Activated naive CD8-positive, alpha-beta T cell treated with anti-CD3 and anti-CD28 coated beads, Interleukin-2, amount 10 ng/mL, durations not matched to agents 7 days and 5 days (primary cell): ENCODE measurements at regions of chr1 and their contacts with region 1.

Region 1: DNA sequence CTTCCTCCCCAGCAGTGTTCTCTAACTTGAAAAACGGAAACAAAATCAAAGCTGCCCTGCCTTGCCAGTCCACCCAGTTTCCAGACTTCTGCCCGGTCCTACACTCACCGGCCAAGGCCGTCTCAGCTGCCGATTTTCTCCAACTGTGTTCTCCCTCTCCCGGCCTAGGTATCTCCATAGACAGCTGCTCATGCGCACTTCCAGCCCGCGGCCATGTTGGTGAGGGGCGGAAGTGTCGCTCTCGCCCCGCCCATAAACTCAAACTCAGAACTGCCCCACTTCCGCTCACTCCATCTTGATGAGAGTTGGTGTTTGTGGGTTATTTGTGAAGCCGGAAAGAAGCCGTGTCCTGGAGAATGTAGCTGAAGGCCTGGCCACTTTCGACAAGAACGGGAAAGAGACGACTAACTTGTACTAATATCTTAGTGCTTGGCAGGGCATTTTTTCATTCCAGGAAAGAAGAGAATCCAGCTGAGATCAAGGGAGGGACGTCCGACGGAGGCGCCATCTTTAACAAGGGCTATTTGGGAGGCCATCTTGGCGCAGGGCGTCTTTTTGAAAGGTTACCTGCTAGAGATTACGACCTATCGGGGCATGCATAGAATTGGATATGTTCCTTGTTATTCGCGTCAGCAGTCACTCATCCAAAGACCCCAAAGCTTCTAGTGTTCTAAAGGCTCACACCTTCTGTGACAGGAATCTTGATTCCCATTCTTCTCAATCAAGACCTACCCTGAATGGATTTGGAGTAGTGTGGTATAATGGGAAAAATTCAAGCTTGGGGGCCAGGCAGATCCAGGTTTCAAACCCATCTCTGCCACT is at the start of gene USF1:
- DNase-seq: peak; percentile 93
- ATAC-seq: peak; percentile 73
- H3K4me3 Mint-ChIP-seq: peak within 1 kb of the TSS; percentile 93
- H3K27ac Mint-ChIP-seq: peak within 1 kb of the TSS; percentile 99
- H3K4me1 Mint-ChIP-seq: peaks cover 36% of the 10 kb centered on the region
- H3K27me3 Mint-ChIP-seq: no peaks in the 10 kb centered on the region
- total RNA-seq, gene USF1: 93.0 to 96.3 TPM

Region 2: DNA sequence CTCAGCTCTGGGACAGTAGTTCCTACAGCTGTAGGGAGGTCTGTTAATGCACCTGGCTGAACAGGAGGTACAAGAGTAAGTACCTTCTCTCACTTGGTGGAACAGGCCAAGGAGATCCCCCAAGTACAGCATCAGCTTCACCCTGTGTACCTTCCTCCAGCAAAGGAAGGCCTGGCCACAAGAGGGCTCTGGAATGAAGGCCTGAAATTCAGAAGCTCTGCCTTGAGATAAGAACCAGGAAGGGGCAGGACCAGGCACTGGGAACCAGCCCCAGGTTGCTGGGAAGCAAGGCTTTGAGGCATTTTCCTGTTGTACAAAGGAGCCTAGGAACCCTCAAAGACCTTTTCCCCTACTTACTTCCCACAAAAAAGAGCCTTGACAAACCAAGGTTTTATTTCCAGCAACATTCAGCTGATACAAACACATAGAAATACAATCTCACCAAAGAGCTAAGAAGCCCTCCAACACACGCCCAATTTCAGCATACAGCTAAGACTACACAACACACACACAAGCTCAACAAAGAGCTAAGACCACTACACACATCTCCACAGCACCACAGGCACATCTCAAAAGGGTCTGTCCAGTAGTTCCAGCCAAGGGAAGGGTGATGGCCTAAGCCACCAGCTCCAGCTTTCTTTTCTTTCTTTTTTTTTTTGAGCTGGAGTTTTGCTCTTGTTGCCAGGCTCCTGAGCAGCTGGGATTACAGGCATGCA is 48.5 kb before region 1 on chr1:
- POLR2A ChIA-PET with region 1: interaction called, 22 read pairs
- DNase-seq: no peak
- ATAC-seq: peak; percentile 83
- H3K4me3 Mint-ChIP-seq: no peak overlapping the region
- H3K27ac Mint-ChIP-seq: peak overlapping the region; percentile 57
- H3K4me1 Mint-ChIP-seq: peaks cover 7% of the 10 kb centered on the region
- H3K27me3 Mint-ChIP-seq: peaks cover 3% of the 10 kb centered on the region

Region 3: DNA sequence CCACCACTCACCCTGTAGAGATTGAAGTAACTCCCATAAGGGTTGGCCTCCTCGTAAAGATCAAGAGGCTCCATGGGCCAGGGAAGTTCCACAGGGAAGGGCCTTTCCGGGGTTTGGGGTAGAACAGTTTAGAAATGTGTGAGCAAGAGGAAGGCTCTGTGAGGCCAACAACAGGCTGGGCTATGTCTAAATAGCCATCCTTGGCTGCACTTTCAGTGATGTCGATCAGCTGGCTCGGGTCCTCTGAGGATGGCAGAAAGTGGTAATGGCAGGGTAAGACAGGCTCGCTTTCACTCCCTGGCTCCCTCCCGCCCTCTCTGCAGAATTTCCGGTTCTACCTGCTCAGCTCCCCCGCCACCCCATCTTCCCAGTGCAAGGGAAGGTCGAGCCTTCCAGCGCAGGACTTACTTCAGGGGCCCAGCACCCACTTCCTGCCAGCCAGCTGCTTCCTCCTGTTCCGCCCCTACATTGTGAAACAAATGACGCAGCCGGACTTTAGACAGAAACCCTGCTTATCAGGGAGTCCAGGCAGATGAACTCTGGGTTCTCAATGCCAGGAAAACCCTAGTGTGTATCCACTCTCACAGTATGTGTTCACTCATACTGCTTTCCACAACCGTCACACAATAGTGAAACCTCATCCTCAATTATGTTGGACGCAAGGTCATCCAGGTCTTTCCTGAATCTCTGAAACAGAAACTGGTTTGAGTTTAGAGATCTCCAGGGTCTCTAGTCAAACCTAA is 32.3 kb before region 1 on chr1:
- POLR2A ChIA-PET with region 1: interaction called, 18 read pairs
- DNase-seq: peak; percentile 66
- ATAC-seq: peak; percentile 92
- H3K4me3 Mint-ChIP-seq: peak overlapping the region; percentile 79
- H3K27ac Mint-ChIP-seq: peak overlapping the region; percentile 87
- H3K4me1 Mint-ChIP-seq: peaks cover 26% of the 10 kb centered on the region
- H3K27me3 Mint-ChIP-seq: no peaks in the 10 kb centered on the region

Region 4: GRCh38 chr1:161021165-161021960 is 24.6 kb before region 1 on chr1:
- POLR2A ChIA-PET with region 1: interaction called, 32 read pairs
- DNase-seq: peak; percentile 84
- ATAC-seq: peak; percentile 95
- H3K4me3 Mint-ChIP-seq: peak overlapping the region; percentile 97
- H3K27ac Mint-ChIP-seq: peak overlapping the region; percentile 79
- H3K4me1 Mint-ChIP-seq: peaks cover 29% of the 10 kb centered on the region
- H3K27me3 Mint-ChIP-seq: no peaks in the 10 kb centered on the region

Region 5: DNA sequence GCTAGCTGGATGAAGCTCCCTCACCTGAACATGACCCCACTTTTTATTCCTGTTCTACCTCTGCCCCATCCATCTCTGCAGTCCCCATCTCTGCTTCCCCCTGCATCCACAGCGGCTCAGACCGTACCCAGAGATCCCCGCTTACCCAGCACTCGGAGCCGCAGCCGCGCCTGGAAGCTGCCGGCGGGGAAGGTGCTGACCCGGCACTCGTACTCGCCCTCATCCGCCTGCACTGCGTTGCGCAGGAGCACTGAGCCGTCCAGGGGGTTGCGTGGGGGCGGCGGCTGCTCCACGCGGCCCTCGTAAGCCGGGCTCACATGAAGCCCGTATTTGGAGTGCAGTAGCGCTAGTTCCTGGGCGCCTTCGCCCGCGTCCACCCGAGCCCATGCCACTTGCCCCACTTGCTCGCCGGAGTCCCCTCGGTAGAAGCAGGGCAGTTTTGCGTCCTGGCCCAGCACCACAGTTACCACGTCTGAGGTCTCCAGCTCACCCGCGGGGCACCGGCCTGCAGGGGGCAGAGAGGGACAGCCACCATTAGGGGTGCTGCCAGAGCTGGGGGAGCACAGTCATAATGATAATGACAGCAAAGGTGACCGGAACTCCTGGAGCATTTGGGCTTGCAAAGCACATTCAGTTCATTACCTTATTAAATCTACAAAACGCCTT is 33.6 kb after region 1 on chr1:
- POLR2A ChIA-PET with region 1: no interaction called
- DNase-seq: no peak
- ATAC-seq: no peak
- H3K4me3 Mint-ChIP-seq: no peak overlapping the region
- H3K27ac Mint-ChIP-seq: no peak overlapping the region
- H3K4me1 Mint-ChIP-seq: peaks cover 7% of the 10 kb centered on the region
- H3K27me3 Mint-ChIP-seq: no peaks in the 10 kb centered on the region

Region 6: DNA sequence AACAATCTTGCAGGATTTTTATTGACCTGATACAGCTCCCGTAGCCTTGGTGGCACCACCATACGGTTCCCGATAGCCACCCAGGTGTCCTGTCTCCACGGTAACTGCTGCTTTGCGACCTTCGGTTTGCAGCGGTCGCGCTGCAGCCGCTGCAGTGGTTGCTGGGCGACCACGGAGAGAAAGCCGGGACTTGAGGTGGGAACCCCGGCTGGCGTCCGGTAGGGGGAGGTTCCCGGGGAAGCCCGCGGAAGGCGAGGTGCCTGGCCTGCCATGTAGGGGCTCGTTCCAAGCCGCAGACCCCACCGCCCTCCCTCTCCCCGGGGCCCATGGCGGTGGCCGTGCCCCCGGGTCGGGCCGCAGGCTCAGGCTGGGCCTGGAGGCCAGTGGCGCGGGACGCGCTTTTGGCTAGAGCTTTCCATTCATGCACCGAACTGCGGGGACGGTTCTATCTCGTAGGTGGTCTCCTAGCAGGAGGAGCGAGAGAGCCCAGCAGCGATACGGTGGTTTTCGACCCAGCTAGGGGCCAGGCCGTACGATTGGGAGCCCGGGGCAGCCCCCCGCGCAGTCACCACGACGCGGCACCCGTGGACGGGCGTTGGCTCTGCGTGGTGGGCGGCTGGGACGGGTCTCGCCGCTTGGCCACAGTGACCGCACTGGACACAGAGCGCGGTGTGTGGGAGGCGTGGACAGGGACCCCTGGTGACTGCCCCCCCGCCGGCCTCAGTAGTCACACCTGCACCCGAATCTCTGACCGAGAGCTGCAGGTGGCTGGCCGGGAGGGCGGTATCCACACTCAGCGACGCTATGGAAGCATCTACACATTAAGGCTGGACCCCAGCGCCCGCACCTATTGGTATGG is 52.5 kb after region 1 on chr1 and contains the start of gene KLHDC9:
- POLR2A ChIA-PET with region 1: interaction called, 18 read pairs
- DNase-seq: peak; percentile 82
- ATAC-seq: peak; percentile 84
- H3K4me3 Mint-ChIP-seq: peak within 1 kb of the TSS; percentile 94
- H3K27ac Mint-ChIP-seq: peak within 1 kb of the TSS; percentile 90
- H3K4me1 Mint-ChIP-seq: peaks cover 21% of the 10 kb centered on the region
- H3K27me3 Mint-ChIP-seq: no peaks in the 10 kb centered on the region
- total RNA-seq, gene KLHDC9: 1.2 TPM

Region 7: DNA sequence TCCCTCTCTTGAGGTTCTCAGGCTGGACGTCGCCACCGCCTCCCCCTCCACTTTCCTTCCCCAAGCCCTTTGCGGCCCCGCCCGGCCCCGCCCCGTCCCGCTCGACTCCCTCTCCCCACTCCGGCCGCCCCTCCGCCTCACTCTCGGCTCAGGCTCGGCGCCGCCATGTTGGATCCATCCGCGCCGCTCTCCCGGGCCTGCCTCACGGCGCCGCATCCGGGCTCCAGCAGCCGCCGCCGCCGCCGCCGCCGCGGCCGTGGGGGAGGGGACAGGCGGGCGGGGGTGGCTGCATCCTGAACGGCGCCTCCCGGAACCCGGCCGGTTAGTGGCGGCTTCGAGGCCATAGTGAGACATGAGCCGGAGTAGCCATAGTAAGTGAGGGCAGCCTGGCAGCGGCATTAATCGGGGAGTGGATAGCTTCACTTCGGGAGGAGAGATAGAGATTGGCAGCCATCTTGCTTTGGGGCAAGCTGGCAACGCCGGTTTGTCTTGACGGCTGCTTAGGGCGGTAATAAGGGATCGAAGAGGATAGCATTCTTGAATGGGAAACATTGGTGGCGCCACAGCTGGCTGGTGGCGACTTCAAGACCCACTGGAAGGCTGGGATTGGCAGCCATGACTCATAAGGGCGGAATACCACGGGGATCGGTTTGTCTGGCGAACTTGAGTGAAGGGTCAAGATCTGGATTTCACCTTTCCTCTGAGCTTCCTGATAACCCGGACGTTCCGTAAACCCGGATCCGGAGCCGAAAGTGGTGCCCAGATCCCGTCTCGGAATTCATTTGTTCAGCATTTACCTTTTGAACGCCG is 86.7 kb after region 1 on chr1 and contains the start of gene DEDD:
- POLR2A ChIA-PET with region 1: interaction called, 15 read pairs
- DNase-seq: peak; percentile 92
- ATAC-seq: peak; percentile 98
- H3K4me3 Mint-ChIP-seq: no peak within 1 kb of the TSS
- H3K27ac Mint-ChIP-seq: no peak within 1 kb of the TSS
- H3K4me1 Mint-ChIP-seq: peaks cover 35% of the 10 kb centered on the region
- H3K27me3 Mint-ChIP-seq: no peaks in the 10 kb centered on the region
- total RNA-seq, gene DEDD: 39.8 to 40.3 TPM